Activated CD4-positive, alpha-beta memory T cell treated with anti-CD3 and anti-CD28 coated beads for 36 hours (primary cell): ENCODE measurements at regions of chr4 and their contacts with region 1.

Region 1: DNA sequence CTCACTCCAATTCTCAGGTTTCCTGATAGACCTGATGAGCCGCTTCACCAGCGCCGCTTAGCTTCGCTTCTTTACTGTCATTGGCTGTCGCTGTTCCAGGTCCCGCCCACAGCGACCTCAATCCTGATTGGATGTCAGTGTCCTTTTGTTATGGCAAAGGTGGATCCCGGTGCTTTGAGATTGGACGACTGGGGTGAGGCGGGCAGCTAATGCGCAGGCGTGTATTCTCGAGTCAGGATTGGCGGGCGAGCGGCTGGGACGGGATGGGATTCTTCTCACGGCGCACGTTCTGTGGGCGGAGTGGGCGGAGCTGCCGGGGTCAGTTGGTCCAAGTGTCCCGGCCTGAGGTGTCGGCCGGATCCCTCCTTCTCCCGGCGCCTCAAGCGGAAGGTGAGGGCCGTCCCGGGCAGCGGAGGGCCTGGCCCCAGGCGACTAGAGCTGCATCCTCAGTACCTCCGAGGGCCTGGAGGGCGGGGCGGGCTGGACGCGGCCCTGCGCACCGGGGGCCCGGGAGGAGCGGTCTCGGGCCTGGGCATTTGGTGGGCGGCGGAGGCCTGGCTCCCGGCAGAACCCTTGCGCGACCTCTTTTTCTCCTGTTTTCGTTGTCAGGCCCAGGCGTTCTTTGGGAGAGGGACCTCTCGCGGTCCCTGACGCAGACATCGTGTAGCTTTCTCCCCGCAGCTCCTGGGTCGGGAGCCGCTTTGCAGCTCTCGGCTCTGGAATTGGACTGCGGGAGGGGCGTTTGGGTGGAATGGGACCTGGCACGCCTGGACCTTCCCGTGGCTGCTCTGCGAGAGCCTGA is at the start of gene SCOC:
- DNase-seq: peak; percentile 99
- H3K4me3 Mint-ChIP-seq: no peak within 1 kb of the TSS
- H3K27ac Mint-ChIP-seq: no peak within 1 kb of the TSS
- H3K4me1 Mint-ChIP-seq: peaks cover 32% of the 10 kb centered on the region
- H3K27me3 Mint-ChIP-seq: no peaks in the 10 kb centered on the region
- total RNA-seq, gene SCOC: 46.9 to 48.4 TPM

Region 2: GRCh38 chr4:139734875-139735380 is 638.6 kb before region 1 on chr4:
- CTCF ChIA-PET with region 1: no interaction called
- POLR2A ChIA-PET with region 1: no interaction called
- intact Hi-C with region 1: loop called (anchors 10 kb)
- DNase-seq: peak; percentile 73
- H3K4me3 Mint-ChIP-seq: peak overlapping the region; percentile 46
- H3K27ac Mint-ChIP-seq: no peak overlapping the region
- H3K4me1 Mint-ChIP-seq: peaks cover 16% of the 10 kb centered on the region
- H3K27me3 Mint-ChIP-seq: peaks cover 40% of the 10 kb centered on the region

Region 3: DNA sequence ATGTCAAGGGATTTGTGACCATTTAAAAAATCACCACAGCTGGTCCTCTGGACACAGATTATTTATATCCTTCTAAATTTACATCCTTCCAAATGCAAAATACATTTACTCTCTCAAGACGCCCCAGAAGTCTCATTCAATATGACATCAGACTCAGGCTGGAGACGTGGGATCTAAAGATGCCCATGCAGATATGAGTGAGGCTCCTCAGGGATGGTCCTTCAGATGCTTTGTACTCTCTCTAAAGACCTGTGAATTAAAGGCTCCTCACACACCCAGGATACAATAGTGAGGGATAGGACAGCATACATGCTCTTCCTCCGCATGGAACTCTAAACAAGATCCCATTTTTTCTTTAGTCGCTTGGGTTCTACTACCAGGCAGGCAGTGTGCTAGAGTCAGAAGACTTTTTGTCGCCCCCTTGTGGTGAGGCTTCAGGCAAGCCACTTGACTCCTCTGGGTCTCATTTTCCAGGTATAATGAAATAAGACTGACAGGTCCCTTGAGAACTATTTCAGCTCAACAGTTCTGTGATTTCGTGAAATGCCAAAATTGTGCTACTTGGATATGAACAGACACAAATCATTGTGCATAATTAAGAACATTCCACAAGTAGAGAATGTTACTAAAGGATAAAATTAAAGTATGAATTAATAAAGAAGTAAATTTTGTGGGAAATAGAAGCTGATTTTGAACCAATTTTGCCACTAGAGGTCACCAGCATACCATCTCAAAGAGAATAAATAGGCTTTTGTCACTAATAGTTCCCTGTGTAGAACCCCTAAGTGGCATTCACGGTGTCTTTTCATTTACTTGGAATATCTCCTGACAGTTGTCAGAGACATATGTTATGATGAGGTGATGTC is 13.7 kb before region 1 on chr4:
- CTCF ChIA-PET with region 1: interaction called, 72 read pairs
- POLR2A ChIA-PET with region 1: no interaction called
- intact Hi-C with region 1: loop called (anchors 2 kb)
- DNase-seq: peak; percentile 81
- H3K4me3 Mint-ChIP-seq: no peak overlapping the region
- H3K27ac Mint-ChIP-seq: no peak overlapping the region
- H3K4me1 Mint-ChIP-seq: no peaks in the 10 kb centered on the region
- H3K27me3 Mint-ChIP-seq: peaks cover 3% of the 10 kb centered on the region

Region 4: GRCh38 chr4:140743194-140743931 is 369.8 kb after region 1 on chr4:
- CTCF ChIA-PET with region 1: no interaction called
- POLR2A ChIA-PET with region 1: no interaction called
- intact Hi-C with region 1: no loop called
- DNase-seq: no peak
- H3K4me3 Mint-ChIP-seq: no peak overlapping the region
- H3K27ac Mint-ChIP-seq: no peak overlapping the region
- H3K4me1 Mint-ChIP-seq: peaks cover 2% of the 10 kb centered on the region
- H3K27me3 Mint-ChIP-seq: peaks cover 10% of the 10 kb centered on the region

Region 5: DNA sequence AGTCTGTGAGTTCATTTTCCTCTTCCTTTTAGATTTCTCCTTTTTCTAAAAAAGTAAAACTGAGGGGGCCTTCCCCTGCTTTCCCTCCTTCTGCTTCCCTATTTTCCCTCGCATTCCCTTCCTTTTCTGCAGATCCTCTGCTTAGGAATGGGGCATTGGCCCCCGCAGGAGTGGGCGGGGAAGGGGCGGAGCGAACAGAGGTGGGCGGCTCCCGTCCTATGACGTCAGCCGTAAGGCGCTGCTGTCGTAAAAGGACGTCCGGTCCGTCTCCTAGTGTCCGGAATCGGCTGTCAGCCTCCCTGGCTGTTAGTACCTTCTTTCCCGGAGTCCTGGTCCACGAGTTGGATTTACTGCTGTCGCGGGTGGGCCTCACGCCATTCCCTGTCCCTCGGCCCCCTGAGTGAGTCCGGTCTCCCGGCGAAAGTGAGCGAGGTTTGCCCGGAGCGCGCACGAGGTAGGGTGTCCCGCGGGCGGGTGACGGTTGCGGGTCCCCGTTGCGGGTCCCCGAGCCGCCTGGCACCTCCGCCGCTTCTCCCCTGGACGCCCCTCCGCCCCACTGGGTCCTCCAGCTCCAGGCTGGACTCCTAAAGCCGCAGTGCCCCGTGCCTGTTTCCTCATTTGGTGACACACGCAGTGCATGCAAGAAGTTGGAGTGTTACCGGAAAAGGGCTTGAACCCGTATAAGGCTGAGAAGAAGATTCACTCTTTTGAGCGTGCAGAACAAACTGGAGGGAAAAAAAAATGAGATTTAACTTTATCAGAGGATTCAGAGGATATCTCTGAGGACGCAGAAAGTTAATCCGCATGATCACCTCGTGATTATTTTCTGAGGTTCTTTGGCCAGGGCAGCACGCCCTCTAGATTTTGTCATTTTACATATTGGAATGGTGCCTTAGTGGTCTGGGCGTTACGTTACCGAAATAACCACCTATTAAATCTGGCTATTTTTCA is 847.4 kb after region 1 on chr4 and contains the start of gene ZNF330:
- CTCF ChIA-PET with region 1: no interaction called
- POLR2A ChIA-PET with region 1: no interaction called
- intact Hi-C with region 1: loop called (anchors 2 kb)
- DNase-seq: peak; percentile 91
- H3K4me3 Mint-ChIP-seq: peak within 1 kb of the TSS; percentile 91
- H3K27ac Mint-ChIP-seq: peak within 1 kb of the TSS; percentile 90
- H3K4me1 Mint-ChIP-seq: peaks cover 33% of the 10 kb centered on the region
- H3K27me3 Mint-ChIP-seq: peaks cover 3% of the 10 kb centered on the region
- total RNA-seq, gene ZNF330: 60.3 to 62.6 TPM